CD4-positive, alpha-beta memory T cell (primary cell): ENCODE measurements at regions of chr12 and their contacts with region 1.

Region 1: DNA sequence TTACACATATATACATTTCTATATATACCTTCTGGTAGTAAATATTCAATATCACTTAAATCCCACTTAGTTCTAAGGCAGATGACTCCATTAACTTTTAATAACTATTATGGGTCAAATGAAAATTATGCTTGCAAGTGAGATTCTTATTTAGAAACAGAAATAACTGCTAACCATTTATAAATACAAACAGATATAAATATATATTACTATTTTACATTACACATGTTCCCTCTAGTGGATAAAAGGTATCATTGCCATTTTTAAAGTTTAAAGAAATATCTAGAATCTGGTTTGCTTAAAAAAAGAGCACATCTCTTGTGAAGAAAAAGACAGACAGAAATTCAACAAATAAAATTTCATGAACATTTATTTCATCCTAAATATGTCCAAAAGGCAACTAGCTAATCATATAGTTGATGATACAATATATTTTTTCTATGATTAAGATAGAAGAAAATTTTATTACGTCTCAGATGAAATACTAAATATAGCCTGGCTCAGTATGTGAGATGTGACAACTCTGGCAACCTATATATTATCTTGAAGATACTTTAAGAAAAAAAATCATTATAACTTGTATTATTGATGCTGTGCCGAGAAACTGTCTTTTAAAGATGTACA is 11.7 kb upstream of the RAD51AP1 start:
- DNase-seq: peak in 4 of 5 donors; percentile 26 to 35 (median 32)
- H3K4me3 ChIP-seq: no peak overlapping the region
- H3K4me3 Mint-ChIP-seq: no peak overlapping the region
- H3K27ac ChIP-seq: no peak overlapping the region
- H3K27ac Mint-ChIP-seq: no peak overlapping the region
- H3K4me1 ChIP-seq: peaks cover 20% of the 10 kb centered on the region
- H3K4me1 Mint-ChIP-seq: peaks cover 0 to 9% (median 4%) of the 10 kb centered on the region in 4 donors
- H3K27me3 ChIP-seq: no peaks in the 10 kb centered on the region
- H3K27me3 Mint-ChIP-seq: no peaks in the 10 kb centered on the region

Region 2: GRCh38 chr12:3998968-3999826 is 527.8 kb before region 1 on chr12:
- CTCF ChIA-PET with region 1: no interaction called
- POLR2A ChIA-PET with region 1: no interaction called
- intact Hi-C with region 1: loop called (anchors 10 kb)
- DNase-seq: peak; percentile 39 to 60 (median 55)
- H3K4me3 ChIP-seq: no peak overlapping the region
- H3K4me3 Mint-ChIP-seq: peak overlapping the region in 1 of 8 donors; percentile 15
- H3K27ac ChIP-seq: no peak overlapping the region
- H3K27ac Mint-ChIP-seq: peak overlapping the region in 6 of 7 donors; percentile 70 to 87 (median 84)
- H3K4me1 ChIP-seq: peaks cover 9% of the 10 kb centered on the region
- H3K4me1 Mint-ChIP-seq: peaks cover 7 to 30% (median 20%) of the 10 kb centered on the region in 4 donors
- H3K27me3 ChIP-seq: no peaks in the 10 kb centered on the region
- H3K27me3 Mint-ChIP-seq: no peaks in the 10 kb centered on the region

Region 3: DNA sequence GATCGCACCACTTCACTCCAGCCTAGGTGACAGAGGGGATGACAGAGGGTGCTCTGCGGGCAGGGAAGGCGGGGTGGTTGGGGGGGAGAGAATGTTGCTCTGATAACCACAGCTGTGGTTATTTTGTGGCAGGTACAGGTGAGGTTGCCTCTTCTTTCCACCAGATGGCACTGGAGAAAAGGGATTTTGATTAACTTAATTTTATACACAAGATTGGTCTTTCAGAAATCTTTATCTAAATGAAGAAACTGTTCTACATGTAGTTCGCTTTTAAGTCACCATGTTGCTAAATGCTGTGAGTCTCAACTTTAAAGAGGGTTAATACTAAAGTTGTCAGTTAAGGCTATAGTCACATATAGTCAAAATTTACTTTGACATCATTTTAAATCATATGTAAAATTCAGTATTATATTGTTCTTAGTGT is 173.2 kb before region 1 on chr12:
- CTCF ChIA-PET with region 1: interaction called, 3 read pairs
- POLR2A ChIA-PET with region 1: no interaction called
- intact Hi-C with region 1: loop called (anchors 1 kb)
- DNase-seq: peak; percentile 42 to 65 (median 53)
- H3K4me3 ChIP-seq: no peak overlapping the region
- H3K4me3 Mint-ChIP-seq: no peak overlapping the region
- H3K27ac ChIP-seq: no peak overlapping the region
- H3K27ac Mint-ChIP-seq: peak overlapping the region in 5 of 7 donors; percentile 42 to 80 (median 59)
- H3K4me1 ChIP-seq: no peaks in the 10 kb centered on the region
- H3K4me1 Mint-ChIP-seq: peaks cover 3 to 7% (median 4%) of the 10 kb centered on the region in 4 donors
- H3K27me3 ChIP-seq: no peaks in the 10 kb centered on the region
- H3K27me3 Mint-ChIP-seq: no peaks in the 10 kb centered on the region

Region 4: GRCh38 chr12:4496145-4496838 is 30.7 kb before region 1 on chr12:
- CTCF ChIA-PET with region 1: no interaction called
- POLR2A ChIA-PET with region 1: no interaction called
- intact Hi-C with region 1: loop called (anchors 5 kb)
- DNase-seq: no peak
- H3K4me3 ChIP-seq: no peak overlapping the region
- H3K4me3 Mint-ChIP-seq: no peak overlapping the region
- H3K27ac ChIP-seq: no peak overlapping the region
- H3K27ac Mint-ChIP-seq: no peak overlapping the region
- H3K4me1 ChIP-seq: no peaks in the 10 kb centered on the region
- H3K4me1 Mint-ChIP-seq: peaks cover 0 to 2% (median 0%) of the 10 kb centered on the region in 4 donors
- H3K27me3 ChIP-seq: no peaks in the 10 kb centered on the region
- H3K27me3 Mint-ChIP-seq: no peaks in the 10 kb centered on the region

Region 5: GRCh38 chr12:4538207-4539160 is 11.4 kb after region 1 on chr12 and contains the start of gene RAD51AP1:
- CTCF ChIA-PET with region 1: interaction called, 3 read pairs
- POLR2A ChIA-PET with region 1: no interaction called
- intact Hi-C with region 1: loop called (anchors 1 kb)
- DNase-seq: peak; percentile 96 to 98 (median 98)
- H3K4me3 ChIP-seq: peak within 1 kb of the TSS; percentile 73 to 90
- H3K4me3 Mint-ChIP-seq: peak within 1 kb of the TSS; percentile 93 to 99 (median 96)
- H3K27ac ChIP-seq: peak within 1 kb of the TSS; percentile 79
- H3K27ac Mint-ChIP-seq: peak within 1 kb of the TSS; percentile 94 to 99 (median 98)
- H3K4me1 ChIP-seq: peaks cover 21% of the 10 kb centered on the region
- H3K4me1 Mint-ChIP-seq: peaks cover 13 to 34% (median 26%) of the 10 kb centered on the region in 4 donors
- H3K27me3 ChIP-seq: no peaks in the 10 kb centered on the region
- H3K27me3 Mint-ChIP-seq: no peaks in the 10 kb centered on the region
- total RNA-seq, gene RAD51AP1: 0.58 to 1.5 TPM

Region 6: DNA sequence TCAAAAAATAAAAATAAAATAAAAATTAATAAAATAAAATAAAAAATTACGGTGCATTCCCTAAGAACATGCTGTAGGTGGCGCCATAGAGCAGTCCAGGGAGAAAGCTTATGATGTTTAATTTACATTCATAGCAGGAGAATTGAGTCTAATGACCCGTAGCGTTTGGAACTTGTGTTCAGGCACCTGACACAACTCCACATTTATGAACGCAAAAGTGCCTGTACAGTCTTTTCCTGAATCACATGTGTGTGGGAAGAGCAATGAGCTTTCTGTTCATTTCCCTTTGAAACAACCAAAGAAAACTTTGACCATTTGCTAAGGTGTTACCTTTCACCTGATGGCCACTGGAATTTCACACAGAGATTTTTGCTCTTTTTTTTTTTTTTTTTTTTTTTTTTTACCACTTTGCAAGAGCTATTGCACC is 322.1 kb after region 1 on chr12:
- CTCF ChIA-PET with region 1: no interaction called
- POLR2A ChIA-PET with region 1: no interaction called
- intact Hi-C with region 1: no loop called
- DNase-seq: peak in 3 of 5 donors; percentile 12 to 37 (median 24)
- H3K4me3 ChIP-seq: no peak overlapping the region
- H3K4me3 Mint-ChIP-seq: no peak overlapping the region
- H3K27ac ChIP-seq: no peak overlapping the region
- H3K27ac Mint-ChIP-seq: no peak overlapping the region
- H3K4me1 ChIP-seq: peaks cover 2% of the 10 kb centered on the region
- H3K4me1 Mint-ChIP-seq: peaks cover 0 to 9% (median 3%) of the 10 kb centered on the region in 4 donors
- H3K27me3 ChIP-seq: no peaks in the 10 kb centered on the region
- H3K27me3 Mint-ChIP-seq: peaks cover 0 to 5% of the 10 kb centered on the region in 2 donors